Left cardiac atrium (tissue), 4 donors: ENCODE measurements at regions of chr7 and their contacts with region 1.

Region 1: DNA sequence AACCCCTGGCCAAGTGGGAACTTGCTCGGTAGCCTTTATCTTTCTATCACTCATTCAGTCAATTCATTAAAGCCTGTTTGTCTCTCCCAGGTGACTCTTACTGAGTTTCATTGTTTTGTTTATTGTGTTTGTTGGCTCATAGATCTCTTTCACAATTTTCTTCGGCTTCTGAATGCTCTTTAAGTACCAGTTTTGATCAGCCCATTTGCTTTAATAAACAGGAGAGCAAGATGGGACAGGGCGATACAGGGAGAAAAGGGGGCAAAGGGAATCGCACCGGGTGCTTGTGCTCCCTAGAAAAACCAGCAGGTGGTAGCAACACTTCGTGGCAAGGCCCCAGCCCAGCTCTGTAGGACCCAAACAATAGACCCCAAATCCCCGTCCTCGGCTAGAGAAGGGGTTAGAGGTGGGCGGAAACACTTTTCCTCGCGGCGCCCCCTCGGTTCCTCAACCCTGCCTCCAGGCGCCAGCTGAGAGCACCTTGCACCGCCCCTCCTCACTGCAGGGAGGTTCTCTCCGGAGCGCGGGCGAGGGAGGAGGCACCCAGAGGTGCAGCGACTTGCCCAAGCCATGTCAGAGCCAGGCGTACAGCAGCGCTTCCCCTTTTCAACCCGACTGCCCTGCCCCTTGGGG is 1.0 kb upstream of the EPHB6 start:
- DNase-seq: peak; percentile 65
- ATAC-seq: peak; percentile 59 to 76

Region 2: GRCh38 chr7:142796608-142797385 is 57.1 kb before region 1 on chr7:
- intact Hi-C with region 1: loop called in 1 of 2 experiments (anchors 10 kb)
- DNase-seq: no peak
- ATAC-seq: peak; percentile 17 to 31

Region 3: DNA sequence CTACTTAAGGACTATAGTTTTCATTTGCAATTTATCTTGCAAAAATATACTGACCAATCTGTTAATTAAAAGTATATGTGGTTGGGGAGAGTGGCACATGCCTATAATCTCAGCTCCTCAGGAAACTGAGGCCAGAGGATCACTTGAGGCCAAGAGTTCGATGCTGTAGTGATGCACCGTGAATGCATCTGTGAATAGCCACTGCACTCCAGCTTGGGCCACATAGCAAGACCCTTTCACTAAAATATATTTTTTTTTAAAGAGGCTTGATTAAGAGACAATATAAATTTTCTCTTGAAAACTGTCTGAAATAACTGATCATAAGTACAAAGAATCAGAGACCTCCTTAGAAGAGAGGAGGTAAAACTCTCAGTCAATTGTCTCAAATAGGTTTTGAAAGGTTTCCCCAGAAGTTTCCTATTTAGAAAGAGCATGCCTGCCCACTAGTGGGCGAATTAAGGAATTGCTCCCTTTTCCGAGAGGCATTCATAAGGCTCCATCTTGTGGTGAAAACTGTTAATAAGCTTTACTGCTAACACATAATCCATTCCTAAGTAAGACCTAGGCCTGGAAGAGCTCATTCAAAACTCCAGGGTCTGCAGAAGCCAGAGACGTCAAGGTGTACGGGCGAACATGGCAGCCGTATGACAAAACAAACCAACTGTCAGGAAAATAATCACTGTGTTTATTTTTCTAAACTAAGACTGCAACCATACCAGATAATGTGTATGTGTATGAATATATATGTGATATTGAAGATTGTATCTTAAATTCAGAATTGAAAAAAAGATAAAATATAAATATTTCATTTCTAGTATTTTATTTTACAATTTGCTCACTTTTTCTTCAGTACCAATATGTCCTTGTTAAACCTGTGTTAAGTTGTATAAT is 361.2 kb after region 1 on chr7:
- intact Hi-C with region 1: loop called in 1 of 2 experiments (anchors 5 kb)
- DNase-seq: peak; percentile 29
- ATAC-seq: peak; percentile 41 to 65